Calu3 (cell line): ENCODE measurements at regions of chr19 and their contacts with region 1.

Region 1: DNA sequence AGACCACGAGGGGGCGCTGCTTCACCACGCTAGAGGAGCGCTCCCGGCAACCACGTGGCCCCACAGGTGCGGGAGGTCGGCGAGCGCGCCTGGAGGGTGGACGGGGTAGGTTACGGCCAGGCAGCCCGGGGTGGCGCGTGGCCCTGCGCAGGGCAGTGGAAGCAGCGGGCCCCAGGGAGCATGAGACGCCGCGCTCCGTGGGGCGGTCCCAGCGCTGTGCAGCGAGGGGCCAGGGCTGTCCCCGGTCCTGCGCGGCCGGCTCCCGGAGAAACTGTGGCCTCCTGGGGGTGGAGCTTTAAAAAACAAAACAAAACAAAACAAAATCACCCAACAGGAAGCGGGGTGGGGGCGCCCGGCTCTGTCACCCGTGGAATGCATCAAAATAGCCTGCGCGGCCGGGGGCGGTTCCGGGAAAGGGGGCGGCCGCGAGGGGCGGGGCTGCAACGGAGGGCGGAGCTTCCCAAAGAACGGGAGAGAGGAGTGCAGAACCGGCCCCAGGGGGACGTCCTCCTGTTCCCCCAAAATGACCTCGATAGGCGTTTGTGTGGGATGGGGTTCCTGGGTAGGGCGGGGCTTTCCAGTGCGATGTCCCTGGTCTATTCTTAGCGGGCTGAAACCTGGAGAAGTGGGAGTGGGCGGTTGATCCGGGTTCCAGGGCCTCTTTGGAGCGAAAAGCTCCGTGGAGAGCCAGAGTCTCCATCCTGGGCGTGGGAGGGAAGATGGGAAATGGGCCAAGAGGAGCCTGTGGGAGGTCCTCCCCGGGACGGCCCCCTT is 27.3 kb downstream of the NUMBL start:
- DNase-seq: peak; percentile 98
- H3K4me3 Mint-ChIP-seq: peak overlapping the region; percentile 79
- H3K27ac Mint-ChIP-seq: peak overlapping the region; percentile 69
- H3K4me1 Mint-ChIP-seq: peaks cover 22% of the 10 kb centered on the region
- H3K27me3 Mint-ChIP-seq: no peaks in the 10 kb centered on the region
- CTCF ChIP-seq: peak; percentile 100

Region 2: DNA sequence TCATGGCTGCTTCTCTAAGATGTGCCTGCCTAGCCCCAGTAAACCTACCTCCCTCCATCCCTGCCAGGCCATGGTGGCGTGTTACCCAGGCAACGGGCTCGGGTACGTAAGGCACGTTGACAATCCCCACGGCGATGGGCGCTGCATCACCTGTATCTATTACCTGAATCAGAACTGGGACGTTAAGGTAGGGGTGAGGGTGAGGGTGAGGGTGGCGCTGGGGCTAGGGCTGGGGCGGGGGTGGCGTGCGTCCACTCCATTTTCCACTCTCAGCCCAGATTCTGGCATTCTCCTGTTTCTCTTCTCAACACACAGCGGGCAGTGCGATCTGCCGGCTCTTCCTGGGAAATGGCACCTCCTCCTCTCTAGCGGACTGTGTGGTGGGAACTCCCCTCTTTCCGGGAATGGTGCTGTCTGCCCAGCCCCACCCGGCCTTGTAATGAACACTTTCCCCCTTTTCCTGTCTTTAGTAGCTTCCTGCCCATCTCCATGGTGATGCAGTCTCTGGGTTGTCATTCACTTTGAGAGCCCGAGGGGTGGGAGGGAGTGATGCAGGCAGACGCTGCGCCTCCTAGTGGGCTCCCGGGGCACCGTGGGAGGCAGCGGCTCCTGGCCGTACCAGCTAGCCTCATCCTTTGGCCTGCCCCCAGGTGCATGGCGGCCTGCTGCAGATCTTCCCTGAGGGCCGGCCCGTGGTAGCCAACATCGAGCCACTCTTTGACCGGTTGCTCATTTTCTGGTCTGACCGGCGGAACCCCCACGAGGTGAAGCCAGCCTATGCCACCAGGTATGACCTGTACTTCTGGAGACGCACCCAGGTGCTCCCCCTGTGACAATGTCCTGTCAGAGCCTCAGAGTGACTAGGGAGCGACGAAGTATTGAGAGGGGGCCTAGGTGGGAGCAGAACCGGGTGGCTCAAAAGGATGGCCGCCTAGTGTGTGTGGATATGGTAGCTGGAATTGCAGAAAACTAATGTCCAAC is 143.7 kb after region 1 on chr19:
- CTCF ChIA-PET with region 1: no interaction called
- intact Hi-C with region 1: loop called (anchors 5 kb)
- DNase-seq: no peak
- H3K4me3 Mint-ChIP-seq: peak overlapping the region; percentile 7
- H3K27ac Mint-ChIP-seq: peak overlapping the region; percentile 72
- H3K4me1 Mint-ChIP-seq: peaks cover 75% of the 10 kb centered on the region
- H3K27me3 Mint-ChIP-seq: no peaks in the 10 kb centered on the region
- CTCF ChIP-seq: peak; percentile 15